Cardiac septum (tissue), 1 donor: ENCODE measurements at regions of chr2 and their contacts with region 1.

Region 1: GRCh38 chr2:231557571-231558237 is 27.5 kb upstream of the NMUR1 start:
- DNase-seq: peak; percentile 84

Region 2: DNA sequence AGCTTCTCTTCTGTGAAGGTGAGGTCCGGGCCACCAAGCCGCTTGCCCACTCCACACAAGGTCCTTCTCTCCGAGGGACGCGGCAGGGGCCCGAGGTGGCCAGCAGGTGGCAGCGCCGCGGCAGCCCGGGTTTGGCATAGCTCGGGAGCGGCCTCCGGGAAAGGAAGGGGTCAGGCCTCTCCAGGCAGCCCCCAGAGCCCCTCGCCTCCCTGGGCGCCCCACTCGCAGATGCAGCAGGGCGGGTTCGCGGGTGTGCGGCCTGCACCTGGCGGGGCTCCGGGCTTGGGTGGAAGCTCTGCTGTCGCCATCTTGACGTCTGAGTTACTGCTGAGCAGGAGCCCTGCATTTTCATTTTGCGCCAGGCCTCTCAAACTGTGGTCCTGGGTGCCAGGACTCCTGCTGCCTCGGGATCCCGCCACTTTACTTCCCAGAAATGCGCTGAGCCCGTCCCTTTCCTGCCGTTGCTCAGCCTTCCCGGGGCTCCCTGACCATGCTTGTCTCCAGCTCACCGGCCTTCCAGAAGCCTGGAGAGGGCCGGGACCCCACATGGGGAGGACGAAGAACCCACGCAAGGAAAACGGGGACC is 74.8 kb before region 1 on chr2:
- intact Hi-C with region 1: loop called (anchors 1 kb)
- DNase-seq: peak; percentile 90

Region 3: DNA sequence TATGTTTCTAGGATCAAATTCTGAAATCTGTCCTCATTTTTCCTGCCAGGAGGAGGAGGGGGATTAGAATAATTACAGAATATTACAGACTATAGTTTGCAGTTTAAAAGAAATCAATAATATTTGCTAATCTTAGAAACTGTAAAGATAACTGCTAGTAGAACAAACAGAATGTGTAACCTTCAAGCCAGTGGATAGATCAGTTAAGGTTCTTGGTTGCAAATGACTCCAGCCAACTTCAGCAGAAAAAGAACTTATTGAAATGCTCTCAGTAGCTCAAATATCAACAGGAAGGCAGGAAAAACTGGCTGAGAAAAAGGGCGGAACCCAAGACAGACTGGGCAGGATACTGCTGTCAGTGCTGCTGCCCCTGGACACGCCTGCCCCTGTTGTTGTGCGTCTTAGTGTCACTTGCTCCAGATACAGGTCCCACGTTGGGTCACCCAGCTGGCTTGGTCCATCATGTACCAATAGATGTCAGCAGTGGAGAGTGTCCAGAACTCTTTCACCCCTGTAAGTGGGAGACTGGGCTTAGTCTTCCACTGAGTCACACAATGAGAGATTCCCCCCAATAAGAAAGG is 37.6 kb before region 1 on chr2:
- intact Hi-C with region 1: loop called (anchors 2 kb)
- DNase-seq: no peak

Region 4: GRCh38 chr2:231530091-231531011 is 27.4 kb before region 1 on chr2 and contains the start of gene NMUR1:
- intact Hi-C with region 1: loop called (anchors 1 kb)
- DNase-seq: peak; percentile 83
- total RNA-seq, gene NMUR1: 0.22 TPM

Region 5: GRCh38 chr2:231627384-231628120 is 69.8 kb after region 1 on chr2:
- intact Hi-C with region 1: no loop called
- DNase-seq: no peak